ENCODE measurements at regions of chr2 and their contacts with region 1.

Region 1: GRCh38 chr2:237966565-237967462 is at the start of gene UBE2F:
- DNase-seq: peak; percentile 98
- H3K4me3 ChIP-seq: peak within 1 kb of the TSS; percentile 55 to 79 (median 72)
- H3K27ac ChIP-seq: peak within 1 kb of the TSS; percentile 71 to 82 (median 80)
- H3K4me1 ChIP-seq: peaks cover 0 to 41% (median 28%) of the 10 kb centered on the region in 4 donors
- H3K27me3 ChIP-seq: no peaks in the 10 kb centered on the region
- CTCF ChIP-seq: no peak
- EP300 ChIP-seq: peak in 1 of 4 donors; percentile 53
- POLR2A ChIP-seq: no peak
- total RNA-seq, gene UBE2F: 50.7 to 81.5 (median 66.4) TPM

Region 2: DNA sequence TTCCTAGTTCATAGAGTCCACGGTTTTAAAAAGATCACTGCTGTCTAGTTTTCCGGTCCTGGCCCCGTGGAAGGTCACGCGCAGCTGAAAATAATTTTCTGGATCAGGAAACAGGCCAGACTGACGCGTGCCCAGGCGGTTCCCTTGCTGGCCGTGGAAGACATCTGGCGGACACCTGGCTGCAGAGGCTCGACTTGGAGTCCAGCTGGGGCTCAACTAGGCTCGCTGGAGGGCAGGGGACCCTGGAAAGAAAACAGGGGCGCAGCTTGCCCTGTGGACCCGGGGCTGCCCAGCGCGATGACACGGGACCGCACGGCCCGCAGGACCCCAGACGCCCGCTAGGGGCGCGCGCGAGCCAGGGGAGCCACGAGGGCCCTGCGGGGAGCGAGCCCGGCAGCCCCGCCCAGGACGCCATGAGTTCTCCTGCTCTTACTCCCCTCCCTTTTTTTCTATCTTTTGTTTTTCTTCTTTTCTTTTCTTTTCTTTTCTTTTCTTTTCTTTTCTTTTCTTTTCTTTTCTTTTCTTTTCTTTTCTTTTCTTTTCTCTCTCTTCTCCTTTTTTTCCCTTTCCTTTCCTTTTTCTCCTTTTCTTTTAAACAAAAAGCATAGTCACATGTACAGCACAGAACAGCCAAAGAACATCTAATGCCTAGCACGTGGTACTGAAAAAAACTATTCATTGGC is 43.2 kb before region 1 on chr2:
- intact Hi-C with region 1: loop called (anchors 5 kb)
- DNase-seq: peak; percentile 93
- H3K4me3 ChIP-seq: peak overlapping the region in 3 of 4 donors; percentile 26 to 32 (median 27)
- H3K27ac ChIP-seq: peak overlapping the region; percentile 56 to 78 (median 64)
- H3K4me1 ChIP-seq: peaks cover 0 to 19% (median 14%) of the 10 kb centered on the region in 4 donors
- H3K27me3 ChIP-seq: no peaks in the 10 kb centered on the region
- CTCF ChIP-seq: peak; percentile 70 to 96 (median 93)
- EP300 ChIP-seq: no peak
- POLR2A ChIP-seq: no peak

Region 3: DNA sequence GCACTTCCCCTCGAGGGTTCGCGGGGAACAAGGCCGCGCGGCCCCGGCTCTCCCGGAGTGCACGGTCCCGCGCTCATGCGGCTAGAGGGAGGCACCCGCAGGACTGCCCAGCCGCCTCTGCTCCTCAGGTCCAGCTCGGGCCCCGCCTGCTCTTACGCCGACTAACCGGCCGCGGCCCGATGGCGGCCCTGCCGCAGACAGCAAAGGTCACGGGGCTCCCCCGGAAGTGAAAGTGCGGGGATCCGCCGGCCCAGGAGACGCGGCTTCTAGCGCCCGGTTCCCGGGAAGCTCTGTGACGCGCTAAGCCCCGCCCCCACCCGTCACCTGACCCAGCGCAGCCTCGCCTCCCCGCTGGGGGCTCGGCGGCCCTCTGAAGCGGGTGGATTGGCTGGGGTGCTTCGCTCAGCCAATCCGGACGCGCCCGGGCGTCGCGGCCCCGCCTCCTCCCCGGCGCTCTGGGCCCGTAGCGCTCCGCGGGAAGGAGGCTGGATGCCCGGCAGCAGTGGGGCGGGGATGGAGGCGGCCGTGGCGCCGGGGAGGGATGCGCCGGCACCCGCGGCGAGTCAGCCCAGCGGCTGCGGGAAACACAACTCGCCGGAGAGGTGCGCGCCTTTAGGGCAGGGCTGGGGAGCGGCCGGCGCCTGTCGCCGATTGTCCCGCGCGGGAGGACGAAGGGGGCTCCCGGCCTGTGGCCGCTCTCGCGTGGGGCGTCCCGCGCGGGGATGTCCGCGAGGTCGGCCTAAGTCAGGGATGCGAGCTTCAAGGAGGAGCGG is 93.9 kb after region 1 on chr2 and contains the start of gene SCLY:
- intact Hi-C with region 1: loop called (anchors 2 kb)
- DNase-seq: peak; percentile 99
- H3K4me3 ChIP-seq: peak within 1 kb of the TSS; percentile 72 to 91 (median 82)
- H3K27ac ChIP-seq: peak within 1 kb of the TSS; percentile 84 to 96 (median 94)
- H3K4me1 ChIP-seq: peaks cover 0 to 25% (median 16%) of the 10 kb centered on the region in 4 donors
- H3K27me3 ChIP-seq: no peaks in the 10 kb centered on the region
- CTCF ChIP-seq: no peak
- EP300 ChIP-seq: peak in 1 of 4 donors; percentile 39
- POLR2A ChIP-seq: peak; percentile 83 to 89
- total RNA-seq, gene SCLY: 10.3 to 14.4 (median 11.7) TPM

Measured in sigmoid colon (tissue), 7 donors.